ENCODE measurements at regions of chr5 and their contacts with region 1.

Region 1: GRCh38 chr5:34674187-34674586 is 18.1 kb downstream of the RAI14 start:
- DNase-seq: no peak
- H3K4me3 ChIP-seq: no peak overlapping the region
- H3K27ac ChIP-seq: peak overlapping the region; percentile 90
- H3K4me1 ChIP-seq: peaks cover 77% of the 10 kb centered on the region
- H3K27me3 ChIP-seq: no peaks in the 10 kb centered on the region
- CTCF ChIP-seq: no peak
- POLR2A ChIP-seq: no peak

Region 2: GRCh38 chr5:33482335-33482734 is 1191.9 kb before region 1 on chr5:
- CTCF ChIA-PET with region 1: no interaction called
- POLR2A ChIA-PET with region 1: no interaction called
- dilution Hi-C with region 1: no loop called
- intact Hi-C with region 1: loop called (anchors 10 kb)
- DNase-seq: no peak
- H3K4me3 ChIP-seq: no peak overlapping the region
- H3K27ac ChIP-seq: no peak overlapping the region
- H3K4me1 ChIP-seq: no peaks in the 10 kb centered on the region
- H3K27me3 ChIP-seq: no peaks in the 10 kb centered on the region
- CTCF ChIP-seq: no peak
- POLR2A ChIP-seq: no peak